ENCODE measurements at regions of chr12 and their contacts with region 1.

Region 1: GRCh38 chr12:52069327-52070184 is at the start of gene ATG101:
- DNase-seq: peak; percentile 90
- H3K4me3 Mint-ChIP-seq: peak within 1 kb of the TSS; percentile 94
- H3K27ac Mint-ChIP-seq: peak within 1 kb of the TSS; percentile 100
- H3K4me1 Mint-ChIP-seq: peaks cover 54% of the 10 kb centered on the region
- H3K27me3 Mint-ChIP-seq: peaks cover 7% of the 10 kb centered on the region
- total RNA-seq, gene ATG101: 28.3 to 30.4 TPM

Region 2: DNA sequence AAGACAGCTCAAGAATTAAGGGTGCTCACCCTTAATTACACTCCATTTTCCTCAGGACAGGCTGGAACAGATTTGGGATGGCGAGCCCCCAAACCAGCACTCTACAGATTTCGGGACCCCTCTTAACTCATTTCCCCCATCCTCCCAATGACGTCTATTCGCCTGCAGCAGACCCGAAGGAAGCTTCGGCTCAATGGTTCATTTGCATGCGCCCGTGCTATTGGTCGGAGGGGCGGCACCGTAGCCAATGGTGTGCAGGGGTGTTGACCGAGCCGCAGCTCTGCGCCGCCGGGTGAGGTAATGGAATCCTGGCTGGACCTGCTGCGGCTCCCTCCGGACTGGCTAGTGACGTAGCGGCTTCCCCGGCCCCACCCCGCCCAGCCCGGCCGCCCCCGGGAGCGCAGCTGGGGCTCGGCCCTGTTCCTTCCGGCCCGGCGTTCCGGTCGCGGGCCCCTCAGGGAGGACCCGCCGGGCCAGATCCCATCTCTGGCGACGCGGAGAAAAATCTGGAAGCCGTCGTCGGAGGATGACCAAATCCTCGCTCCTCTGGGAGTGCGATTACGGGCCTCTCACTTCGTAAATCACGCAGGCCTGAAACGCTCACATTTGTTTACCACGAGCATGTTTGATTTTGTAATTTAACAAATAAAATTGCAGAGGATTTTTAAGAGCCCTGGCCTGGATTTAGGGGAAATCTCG is 36.6 kb before region 1 on chr12:
- CTCF ChIA-PET with region 1: interaction called, 206 read pairs
- POLR2A ChIA-PET with region 1: no interaction called
- DNase-seq: peak; percentile 93
- H3K4me3 Mint-ChIP-seq: peak overlapping the region; percentile 58
- H3K27ac Mint-ChIP-seq: peak overlapping the region; percentile 73
- H3K4me1 Mint-ChIP-seq: peaks cover 32% of the 10 kb centered on the region
- H3K27me3 Mint-ChIP-seq: peaks cover 29% of the 10 kb centered on the region

Region 3: DNA sequence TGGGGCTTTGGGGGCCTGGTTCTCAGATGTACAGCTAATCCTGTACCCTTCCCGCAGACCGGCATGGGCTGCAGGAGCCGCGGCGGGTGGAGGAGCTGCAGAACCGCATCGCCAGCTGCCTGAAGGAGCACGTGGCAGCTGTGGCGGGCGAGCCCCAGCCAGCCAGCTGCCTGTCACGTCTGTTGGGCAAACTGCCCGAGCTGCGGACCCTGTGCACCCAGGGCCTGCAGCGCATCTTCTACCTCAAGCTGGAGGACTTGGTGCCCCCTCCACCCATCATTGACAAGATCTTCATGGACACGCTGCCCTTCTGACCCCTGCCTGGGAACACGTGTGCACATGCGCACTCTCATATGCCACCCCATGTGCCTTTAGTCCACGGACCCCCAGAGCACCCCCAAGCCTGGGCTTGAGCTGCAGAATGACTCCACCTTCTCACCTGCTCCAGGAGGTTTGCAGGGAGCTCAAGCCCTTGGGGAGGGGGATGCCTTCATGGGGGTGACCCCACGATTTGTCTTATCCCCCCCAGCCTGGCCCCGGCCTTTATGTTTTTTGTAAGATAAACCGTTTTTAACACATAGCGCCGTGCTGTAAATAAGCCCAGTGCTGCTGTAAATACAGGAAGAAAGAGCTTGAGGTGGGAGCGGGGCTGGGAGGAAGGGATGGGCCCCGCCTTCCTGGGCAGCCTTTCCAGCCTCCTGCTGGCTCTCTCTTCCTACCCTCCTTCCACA is 10.8 kb before region 1 on chr12:
- CTCF ChIA-PET with region 1: interaction called, 11 read pairs
- POLR2A ChIA-PET with region 1: no interaction called
- DNase-seq: no peak
- H3K4me3 Mint-ChIP-seq: no peak overlapping the region
- H3K27ac Mint-ChIP-seq: no peak overlapping the region
- H3K4me1 Mint-ChIP-seq: no peaks in the 10 kb centered on the region
- H3K27me3 Mint-ChIP-seq: no peaks in the 10 kb centered on the region

Region 4: GRCh38 chr12:52082988-52083637 is 13.6 kb after region 1 on chr12:
- CTCF ChIA-PET with region 1: interaction called, 25 read pairs
- POLR2A ChIA-PET with region 1: interaction called, 3 read pairs
- DNase-seq: peak; percentile 73
- H3K4me3 Mint-ChIP-seq: no peak overlapping the region
- H3K27ac Mint-ChIP-seq: no peak overlapping the region
- H3K4me1 Mint-ChIP-seq: peaks cover 14% of the 10 kb centered on the region
- H3K27me3 Mint-ChIP-seq: peaks cover 11% of the 10 kb centered on the region

Measured in activated CD4-positive, alpha-beta T cell treated with anti-CD3 and anti-CD28 coated beads, Interleukin-2, amount 10 ng/mL, durations not matched to agents 7 days and 5 days (primary cell).